HCT116 (cell line): ENCODE measurements at regions of chr1 and their contacts with region 1.

Region 1: GRCh38 chr1:115807723-115808122 is 33.2 kb downstream of the NHLH2 start:
- DNase-seq: peak; percentile 78
- ATAC-seq: peak; percentile 94
- H3K4me3 ChIP-seq: no peak overlapping the region
- H3K27ac ChIP-seq: no peak overlapping the region
- H3K4me1 ChIP-seq: no peaks in the 10 kb centered on the region
- H3K27me3 ChIP-seq: no peaks in the 10 kb centered on the region
- CTCF ChIP-seq: peak; percentile 68 to 82 (median 77); a peak in 5 of 6 replicates
- POLR2A ChIP-seq: no peak
- RAD21 ChIP-seq: peak; percentile 78

Region 2: DNA sequence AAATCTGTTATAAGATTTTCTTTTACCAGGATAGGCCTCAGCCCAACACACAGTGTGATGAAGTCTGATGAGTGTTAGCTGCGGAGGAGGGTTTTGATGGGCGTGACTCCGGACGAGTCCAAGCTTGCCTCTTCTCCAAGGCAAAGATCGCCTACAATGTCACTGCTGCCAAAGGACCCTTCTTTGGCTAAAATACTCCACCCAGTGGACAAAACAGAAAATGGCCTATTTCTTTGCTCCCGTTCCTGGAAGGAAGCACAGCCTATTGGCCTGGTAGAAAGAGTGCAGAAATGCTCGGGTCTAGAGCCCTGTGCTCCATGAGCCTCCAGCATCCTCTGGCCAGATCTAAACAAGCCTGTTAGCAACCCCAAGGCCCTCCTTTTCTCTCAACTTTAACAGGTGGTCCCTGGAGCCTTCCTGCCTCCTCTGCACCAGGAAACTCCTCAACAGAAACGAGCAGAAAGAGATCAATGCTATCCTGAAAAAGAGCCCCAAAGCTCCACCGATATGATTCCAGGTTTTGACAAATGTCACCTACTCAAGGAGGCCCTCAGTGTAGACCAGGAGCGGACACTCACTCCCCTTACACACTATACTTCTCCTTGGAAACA is 35.8 kb before region 1 on chr1:
- CTCF ChIA-PET with region 1: no interaction called
- POLR2A ChIA-PET with region 1: no interaction called
- RAD21 ChIA-PET with region 1: no interaction called
- intact Hi-C with region 1: no loop called
- DNase-seq: peak; percentile 82
- ATAC-seq: peak; percentile 96
- H3K4me3 ChIP-seq: peak overlapping the region; percentile 12 to 29; a peak in 2 of 4 replicates
- H3K27ac ChIP-seq: peak overlapping the region; percentile 38; the same call in 1 of the 2 replicates
- H3K4me1 ChIP-seq: peaks cover 5 to 13% of the 10 kb centered on the region in 2 experiments; a peak in 3 of 4 replicates
- H3K27me3 ChIP-seq: no peaks in the 10 kb centered on the region
- CTCF ChIP-seq: peak; percentile 74 to 80 (median 79)
- POLR2A ChIP-seq: no peak
- RAD21 ChIP-seq: peak; percentile 92

Region 3: GRCh38 chr1:116133696-116134650 is 326.2 kb after region 1 on chr1:
- CTCF ChIA-PET with region 1: interaction called, 5 read pairs
- POLR2A ChIA-PET with region 1: no interaction called
- RAD21 ChIA-PET with region 1: no interaction called
- intact Hi-C with region 1: loop called (anchors 5 kb)
- DNase-seq: peak; percentile 21
- ATAC-seq: peak; percentile 66
- H3K4me3 ChIP-seq: no peak overlapping the region
- H3K27ac ChIP-seq: no peak overlapping the region
- H3K4me1 ChIP-seq: peaks cover 10 to 16% of the 10 kb centered on the region in 2 experiments; a peak in 3 of 4 replicates
- H3K27me3 ChIP-seq: no peaks in the 10 kb centered on the region
- CTCF ChIP-seq: peak; percentile 47 to 66 (median 63); a peak in 5 of 6 replicates
- POLR2A ChIP-seq: no peak
- RAD21 ChIP-seq: peak; percentile 59; the same call in 1 of the 2 replicates